WTC11 (cell line): ENCODE measurements at regions of chr11 and their contacts with region 1.

Region 1: DNA sequence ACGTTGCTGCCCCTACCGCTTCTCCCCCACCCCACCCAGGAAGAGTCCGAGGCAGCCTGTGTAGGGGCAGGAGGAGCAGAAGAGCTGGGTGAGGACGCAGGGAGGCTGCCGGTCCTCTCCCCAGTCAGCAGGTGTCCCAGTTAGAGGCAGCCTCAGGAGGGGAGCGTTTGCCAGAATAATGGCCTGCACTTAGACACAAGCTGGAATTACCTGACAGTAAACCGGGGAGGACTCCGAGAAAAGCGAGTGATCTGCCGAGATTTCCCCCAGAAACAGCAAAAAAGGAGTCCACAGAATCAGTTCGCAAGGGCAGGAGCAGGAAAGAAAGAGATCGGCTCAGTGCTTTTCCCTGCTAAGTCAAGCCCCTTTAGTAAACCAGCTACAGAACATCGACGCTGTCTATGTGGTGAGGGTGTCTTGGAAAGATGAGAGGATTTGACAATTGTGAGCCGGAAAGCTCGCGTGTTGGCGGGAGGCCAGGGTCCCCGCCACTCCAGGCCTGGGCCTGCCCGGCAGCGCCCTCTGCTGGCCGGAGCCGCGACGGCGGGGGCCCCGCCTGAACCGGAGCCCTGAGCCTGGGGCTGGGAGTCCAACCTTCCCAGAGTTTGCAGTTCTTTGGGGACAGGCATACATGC is 17.7 kb upstream of the THRSP start:
- DNase-seq: peak; percentile 82
- ATAC-seq: peak; percentile 92
- H3K4me3 Mint-ChIP-seq: peak overlapping the region; percentile 62
- H3K27ac Mint-ChIP-seq: no peak overlapping the region
- H3K4me1 Mint-ChIP-seq: peaks cover 24% of the 10 kb centered on the region
- H3K27me3 Mint-ChIP-seq: peaks cover 23% of the 10 kb centered on the region
- CTCF ChIP-seq: peak; percentile 97

Region 2: DNA sequence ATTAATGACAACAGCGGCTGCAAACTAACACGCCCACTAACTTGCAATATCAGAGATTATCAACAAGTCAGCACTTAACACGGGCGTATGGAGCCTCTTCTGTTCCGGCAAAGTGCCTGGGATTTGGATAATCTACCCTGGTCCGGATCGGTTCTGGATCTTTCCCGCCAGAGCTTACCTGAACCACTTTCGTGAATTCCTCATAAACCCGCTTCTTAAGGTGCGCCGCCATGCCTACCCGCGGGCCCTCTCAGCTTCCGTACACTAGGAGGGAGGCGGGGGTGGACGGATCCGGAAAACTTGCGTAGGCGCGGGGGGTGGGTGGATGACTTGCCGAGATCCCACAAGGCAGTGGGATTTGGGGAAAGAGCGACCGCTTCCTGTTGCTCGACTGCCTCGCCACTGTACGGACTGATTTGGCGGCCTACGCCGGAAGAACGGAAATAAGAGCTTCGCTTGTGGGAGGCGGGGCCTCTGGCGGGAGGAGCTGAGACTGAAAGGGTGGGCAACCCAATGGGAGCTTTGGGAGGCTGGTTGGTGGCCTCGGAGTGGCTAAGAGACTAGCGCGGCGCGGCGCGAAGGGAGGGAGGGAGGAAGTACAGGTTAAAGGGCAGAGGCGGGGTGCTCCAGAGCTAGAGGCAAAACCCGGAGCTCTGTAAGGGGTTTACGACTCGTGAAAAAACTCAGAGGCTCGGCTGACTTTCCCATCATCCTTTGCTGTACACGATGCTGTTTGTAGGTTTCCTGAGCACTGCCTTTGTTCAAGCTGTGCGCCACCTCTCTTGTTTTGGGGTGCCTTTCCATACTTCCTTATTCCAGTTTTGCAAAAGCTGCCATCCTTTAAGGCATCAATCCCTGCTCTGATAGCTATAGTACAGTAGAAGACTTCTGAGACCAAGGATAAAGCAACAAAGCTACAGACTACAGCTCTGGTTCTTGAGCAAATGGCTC is 51.3 kb before region 1 on chr11 and contains the start of gene INTS4:
- CTCF ChIA-PET with region 1: interaction called, 23 read pairs
- POLR2A ChIA-PET with region 1: interaction called, 4 read pairs
- DNase-seq: peak; percentile 99
- ATAC-seq: peak; percentile 99
- H3K4me3 Mint-ChIP-seq: peak within 1 kb of the TSS; percentile 98
- H3K27ac Mint-ChIP-seq: peak within 1 kb of the TSS; percentile 96
- H3K4me1 Mint-ChIP-seq: peaks cover 12% of the 10 kb centered on the region
- H3K27me3 Mint-ChIP-seq: no peaks in the 10 kb centered on the region
- CTCF ChIP-seq: no peak
- total RNA-seq, gene INTS4: 34.2 to 37.9 TPM (median 34.2 TPM) in 3 replicates

Region 3: DNA sequence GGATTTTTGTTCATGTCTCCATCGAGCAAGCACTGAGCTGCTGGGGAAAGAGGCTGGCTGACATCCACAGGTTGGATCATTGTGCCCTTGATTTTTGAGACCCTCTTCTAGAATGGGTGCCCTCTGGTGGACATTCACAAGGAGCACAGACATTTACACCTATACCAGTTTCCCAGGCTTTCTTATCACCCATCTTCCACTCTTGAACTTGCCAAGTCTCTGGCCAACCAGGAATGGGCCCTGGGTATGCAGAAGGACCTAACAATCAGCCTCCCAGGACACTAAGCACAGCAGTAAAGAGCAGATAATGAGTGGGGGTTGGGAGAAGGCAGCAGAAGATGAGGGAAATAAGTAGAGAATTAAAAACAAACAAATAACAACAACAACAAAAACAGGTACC is 45.8 kb before region 1 on chr11:
- CTCF ChIA-PET with region 1: interaction called, 23 read pairs
- POLR2A ChIA-PET with region 1: interaction called, 4 read pairs
- DNase-seq: peak; percentile 34
- ATAC-seq: peak; percentile 97
- H3K4me3 Mint-ChIP-seq: no peak overlapping the region
- H3K27ac Mint-ChIP-seq: no peak overlapping the region
- H3K4me1 Mint-ChIP-seq: peaks cover 11% of the 10 kb centered on the region
- H3K27me3 Mint-ChIP-seq: no peaks in the 10 kb centered on the region
- CTCF ChIP-seq: peak; percentile 61

Region 4: DNA sequence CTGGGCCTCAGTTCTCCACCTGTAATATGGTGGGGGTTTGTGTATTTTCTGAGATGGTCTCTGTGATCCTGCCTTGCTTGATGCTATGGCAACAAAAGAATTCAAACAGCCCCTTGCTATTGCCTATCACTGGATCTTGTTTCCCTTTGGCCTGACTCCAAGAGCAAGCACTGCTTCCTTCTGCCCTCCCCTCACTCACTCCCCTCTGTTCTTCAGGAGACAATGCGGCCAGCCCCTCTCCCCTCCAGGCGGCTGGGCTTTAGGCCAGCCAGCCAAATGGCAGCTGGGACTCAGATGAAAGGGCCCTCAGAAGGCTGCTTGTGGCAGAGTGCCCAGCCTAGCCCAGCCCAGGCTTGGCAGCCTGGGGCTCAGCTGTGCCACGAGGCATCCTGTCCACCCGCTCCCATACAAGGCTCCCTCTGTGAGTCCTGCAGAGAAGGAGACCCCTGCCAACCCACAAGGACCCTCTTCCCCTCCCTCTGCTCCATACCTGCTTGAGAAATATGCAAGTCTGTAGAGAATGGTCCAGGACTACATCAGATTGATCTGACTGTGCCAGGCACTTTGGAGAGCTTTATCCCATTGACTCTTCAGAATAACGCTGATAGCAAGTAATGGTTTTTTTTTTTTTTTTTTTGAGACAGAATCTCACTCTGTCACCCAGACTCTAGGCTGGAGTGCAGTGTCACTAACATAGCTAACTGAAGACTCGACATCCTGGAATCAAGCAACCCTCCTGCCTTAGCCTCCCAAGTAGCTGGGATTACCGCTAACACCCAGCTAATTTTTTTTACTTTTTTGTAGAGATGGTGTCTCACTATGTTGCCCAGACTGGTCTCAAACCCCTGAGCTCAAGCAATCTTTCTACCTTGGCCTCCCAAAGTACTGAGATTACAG is 15.3 kb before region 1 on chr11:
- CTCF ChIA-PET with region 1: interaction called, 46 read pairs
- POLR2A ChIA-PET with region 1: interaction called, 6 read pairs
- DNase-seq: no peak
- ATAC-seq: peak; percentile 63
- H3K4me3 Mint-ChIP-seq: no peak overlapping the region
- H3K27ac Mint-ChIP-seq: no peak overlapping the region
- H3K4me1 Mint-ChIP-seq: peaks cover 6% of the 10 kb centered on the region; the same call in 1 of the 2 replicates
- H3K27me3 Mint-ChIP-seq: no peaks in the 10 kb centered on the region
- CTCF ChIP-seq: no peak